ENCODE measurements at regions of chr2 and their contacts with region 1.

Region 1: GRCh38 chr2:54597153-54597848 is 126.2 kb upstream of the EML6 start:
- DNase-seq: no peak
- H3K4me3 ChIP-seq: no peak overlapping the region
- H3K27ac ChIP-seq: no peak overlapping the region
- H3K4me1 ChIP-seq: no peaks in the 10 kb centered on the region
- H3K27me3 ChIP-seq: no peaks in the 10 kb centered on the region
- CTCF ChIP-seq: no peak

Region 2: GRCh38 chr2:54551123-54551756 is 46.1 kb before region 1 on chr2:
- CTCF ChIA-PET with region 1: no interaction called
- POLR2A ChIA-PET with region 1: interaction called, 6 read pairs
- intact Hi-C with region 1: loop called (anchors 2 kb)
- DNase-seq: peak; percentile 55 to 56
- H3K4me3 ChIP-seq: no peak overlapping the region
- H3K27ac ChIP-seq: peak overlapping the region; percentile 20
- H3K4me1 ChIP-seq: peaks cover 56% of the 10 kb centered on the region
- H3K27me3 ChIP-seq: no peaks in the 10 kb centered on the region
- CTCF ChIP-seq: no peak

Region 3: DNA sequence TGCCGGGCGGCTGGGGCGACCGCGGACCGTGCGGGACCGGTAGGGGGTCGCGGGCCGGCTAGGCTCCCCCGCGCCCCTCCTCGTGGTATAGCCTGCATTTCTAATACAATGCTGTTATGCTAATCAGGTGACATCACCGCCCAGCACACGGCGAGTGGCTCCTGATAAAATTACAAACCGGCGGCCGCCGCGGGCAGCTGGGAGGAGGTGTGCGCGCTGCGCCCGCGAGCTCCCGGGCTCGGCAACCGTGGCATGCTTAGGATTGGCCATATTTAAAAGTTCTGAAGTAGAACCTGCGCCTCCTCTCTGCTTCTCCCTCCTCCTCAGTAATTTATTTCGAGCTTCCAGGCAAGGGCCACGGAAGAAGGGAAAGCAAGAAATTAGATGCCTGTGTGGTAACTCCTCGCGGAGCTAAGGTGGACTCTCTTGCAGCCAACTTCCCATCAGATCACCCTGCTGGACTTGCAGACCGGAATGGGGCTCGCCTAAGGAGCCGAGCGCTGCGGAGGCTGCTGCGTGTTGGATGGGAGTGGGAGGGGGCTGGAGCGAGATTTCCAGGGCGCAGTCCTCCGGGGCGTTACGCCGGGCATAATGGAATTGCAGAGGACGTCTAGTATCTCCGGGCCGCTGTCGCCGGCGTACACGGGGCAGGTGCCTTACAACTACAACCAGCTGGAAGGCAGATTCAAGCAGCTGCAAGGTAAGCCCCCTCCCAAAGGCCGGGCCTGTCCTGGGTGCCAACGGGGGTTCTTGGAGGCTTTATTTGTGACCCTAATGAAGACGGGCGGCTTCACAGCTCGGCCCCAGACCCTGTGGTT is 38.9 kb before region 1 on chr2:
- CTCF ChIA-PET with region 1: no interaction called
- POLR2A ChIA-PET with region 1: interaction called, 5 read pairs
- intact Hi-C with region 1: loop called (anchors 1 kb)
- DNase-seq: peak; percentile 72 to 73
- H3K4me3 ChIP-seq: peak overlapping the region; percentile 90
- H3K27ac ChIP-seq: peak overlapping the region; percentile 95
- H3K4me1 ChIP-seq: peaks cover 49% of the 10 kb centered on the region
- H3K27me3 ChIP-seq: no peaks in the 10 kb centered on the region
- CTCF ChIP-seq: no peak

Region 4: DNA sequence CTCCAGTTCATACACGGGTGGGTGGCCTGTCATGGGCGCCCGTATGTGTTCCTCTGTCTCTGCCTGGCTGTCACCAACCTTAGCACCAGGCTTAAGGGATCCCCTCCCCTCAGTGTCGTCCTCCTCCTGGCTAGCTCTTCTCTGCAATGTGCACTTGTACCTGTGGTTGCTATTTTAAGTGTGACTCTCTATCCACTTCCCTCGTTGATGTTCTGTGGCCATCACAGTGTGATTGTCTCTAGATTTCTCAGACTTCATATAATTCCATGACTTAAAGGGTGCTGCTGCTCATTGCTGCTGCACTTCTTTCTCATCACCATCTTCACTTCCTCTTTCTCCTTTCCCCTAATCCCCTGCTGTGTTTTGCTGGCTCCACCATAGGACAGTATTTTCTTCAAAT is 269.6 kb after region 1 on chr2:
- CTCF ChIA-PET with region 1: no interaction called
- POLR2A ChIA-PET with region 1: no interaction called
- intact Hi-C with region 1: no loop called
- DNase-seq: no peak
- H3K4me3 ChIP-seq: no peak overlapping the region
- H3K27ac ChIP-seq: no peak overlapping the region
- H3K4me1 ChIP-seq: no peaks in the 10 kb centered on the region
- H3K27me3 ChIP-seq: no peaks in the 10 kb centered on the region
- CTCF ChIP-seq: no peak